ENCODE measurements at regions of chr3 and their contacts with region 1.

Region 1: GRCh38 chr3:182567700-182568099 is 225.6 kb upstream of the ATP11B start:
- DNase-seq: no peak
- H3K4me3 ChIP-seq: no peak overlapping the region
- H3K27ac ChIP-seq: no peak overlapping the region
- H3K4me1 ChIP-seq: no peaks in the 10 kb centered on the region
- H3K27me3 ChIP-seq: no peaks in the 10 kb centered on the region
- CTCF ChIP-seq: no peak
- EP300 ChIP-seq: no peak
- POLR2A ChIP-seq: no peak

Region 2: DNA sequence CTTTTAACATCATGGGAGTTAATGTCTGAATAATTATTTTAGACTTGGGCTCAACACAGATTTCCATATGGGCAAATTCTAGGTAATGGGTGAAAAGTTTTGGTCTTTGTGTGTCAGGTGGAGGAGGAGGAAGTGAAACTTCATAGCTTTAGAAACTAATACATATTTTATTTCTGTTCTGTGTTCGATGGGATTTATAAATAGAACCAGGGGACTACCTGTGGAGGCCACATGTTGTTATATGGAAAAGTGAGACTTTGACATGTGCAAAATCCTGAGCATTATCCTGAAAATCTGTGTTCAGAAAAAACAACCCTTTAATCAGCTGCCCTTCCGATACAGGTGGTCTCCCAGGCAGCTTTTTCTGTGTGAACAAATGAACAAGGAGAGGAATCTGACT is 646.5 kb before region 1 on chr3:
- intact Hi-C with region 1: no loop called
- DNase-seq: no peak
- H3K4me3 ChIP-seq: no peak overlapping the region
- H3K27ac ChIP-seq: no peak overlapping the region
- H3K4me1 ChIP-seq: no peaks in the 10 kb centered on the region
- H3K27me3 ChIP-seq: no peaks in the 10 kb centered on the region
- CTCF ChIP-seq: no peak
- EP300 ChIP-seq: no peak
- POLR2A ChIP-seq: no peak

Region 3: GRCh38 chr3:183349421-183350157 is 781.9 kb after region 1 on chr3:
- intact Hi-C with region 1: loop called in 1 of 4 experiments (anchors 5 kb)
- DNase-seq: no peak
- H3K4me3 ChIP-seq: no peak overlapping the region
- H3K27ac ChIP-seq: no peak overlapping the region
- H3K4me1 ChIP-seq: no peaks in the 10 kb centered on the region
- H3K27me3 ChIP-seq: no peaks in the 10 kb centered on the region
- CTCF ChIP-seq: no peak
- EP300 ChIP-seq: no peak
- POLR2A ChIP-seq: no peak

Measured in ovary (tissue), 10 donors.